Panc1 (cell line): ENCODE measurements at regions of chr2 and their contacts with region 1.

Region 1: GRCh38 chr2:45533771-45534170 is 77.3 kb downstream of the SRBD1 start:
- DNase-seq: no peak
- ATAC-seq: no peak
- H3K4me3 ChIP-seq: no peak overlapping the region
- H3K27ac ChIP-seq: no peak overlapping the region
- H3K4me1 ChIP-seq: no peaks in the 10 kb centered on the region
- H3K27me3 ChIP-seq: no peaks in the 10 kb centered on the region
- CTCF ChIP-seq: no peak

Region 2: DNA sequence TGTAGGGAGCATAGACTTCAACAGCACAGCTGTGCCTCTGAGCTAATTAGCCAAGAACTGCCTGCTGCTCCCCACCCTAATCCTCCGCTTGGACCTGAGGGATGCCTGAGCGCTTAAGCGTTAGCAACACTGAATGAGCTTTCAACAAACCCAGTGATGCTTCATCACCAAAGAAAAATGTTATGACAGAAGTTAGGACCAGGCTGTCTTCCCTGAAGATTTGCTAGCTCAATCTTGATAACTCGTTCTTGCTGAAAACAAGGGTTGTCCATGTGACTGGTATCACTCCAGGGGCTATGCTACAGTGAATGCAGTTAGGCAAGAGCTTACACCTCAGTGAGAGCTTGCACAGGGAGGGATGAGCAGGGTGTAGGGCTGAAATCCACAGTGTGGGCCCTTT is 333.8 kb before region 1 on chr2:
- CTCF ChIA-PET with region 1: no interaction called
- POLR2A ChIA-PET with region 1: no interaction called
- in situ Hi-C with region 1: no loop called
- intact Hi-C with region 1: no loop called
- DNase-seq: no peak
- ATAC-seq: no peak
- H3K4me3 ChIP-seq: no peak overlapping the region
- H3K27ac ChIP-seq: no peak overlapping the region
- H3K4me1 ChIP-seq: no peaks in the 10 kb centered on the region
- H3K27me3 ChIP-seq: peaks cover 9% of the 10 kb centered on the region
- CTCF ChIP-seq: no peak

Region 3: GRCh38 chr2:45382744-45383143 is 151.0 kb before region 1 on chr2:
- CTCF ChIA-PET with region 1: no interaction called
- POLR2A ChIA-PET with region 1: interaction called, 10 read pairs
- in situ Hi-C with region 1: no loop called
- intact Hi-C with region 1: no loop called
- DNase-seq: no peak
- ATAC-seq: no peak
- H3K4me3 ChIP-seq: no peak overlapping the region
- H3K27ac ChIP-seq: no peak overlapping the region
- H3K4me1 ChIP-seq: no peaks in the 10 kb centered on the region
- H3K27me3 ChIP-seq: no peaks in the 10 kb centered on the region
- CTCF ChIP-seq: no peak

Region 4: GRCh38 chr2:45518546-45518945 is 15.2 kb before region 1 on chr2:
- CTCF ChIA-PET with region 1: no interaction called
- POLR2A ChIA-PET with region 1: no interaction called
- in situ Hi-C with region 1: no loop called
- intact Hi-C with region 1: no loop called
- DNase-seq: no peak
- ATAC-seq: no peak
- H3K4me3 ChIP-seq: no peak overlapping the region
- H3K27ac ChIP-seq: no peak overlapping the region
- H3K4me1 ChIP-seq: no peaks in the 10 kb centered on the region
- H3K27me3 ChIP-seq: no peaks in the 10 kb centered on the region
- CTCF ChIP-seq: no peak